ENCODE measurements at regions of chr4 and their contacts with region 1.

Region 1: DNA sequence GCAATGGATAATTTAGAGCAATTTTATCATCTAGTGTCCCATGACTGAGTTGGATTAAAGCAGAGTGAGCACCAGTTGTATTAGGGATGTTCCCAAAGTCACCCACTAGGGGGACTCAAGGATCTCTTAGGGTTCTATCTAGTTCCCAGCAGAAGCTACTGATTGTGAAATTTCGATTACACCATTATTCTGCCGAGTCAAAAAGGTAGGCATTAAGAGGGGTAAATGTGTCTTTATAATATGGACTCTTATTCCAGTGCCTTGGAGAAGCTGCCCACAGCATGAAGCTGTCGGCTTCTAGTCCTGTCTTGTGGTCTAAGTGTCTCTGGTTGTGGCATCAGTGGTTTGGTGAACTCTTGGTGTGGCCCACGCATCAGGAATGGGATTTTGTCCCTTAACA is 53.3 kb downstream of the RGS12 start:
- DNase-seq: peak; percentile 85
- H3K4me3 ChIP-seq: no peak overlapping the region
- H3K27ac ChIP-seq: no peak overlapping the region
- H3K4me1 ChIP-seq: 0 out of 2 replicates have a peak, but pooled peaks cover 7% of the 10 kb centered on the region
- H3K27me3 ChIP-seq: no peaks in the 10 kb centered on the region

Region 2: GRCh38 chr4:2647403-2648158 is 698.6 kb before region 1 on chr4:
- in situ Hi-C with region 1: no loop called
- DNase-seq: no peak
- H3K4me3 ChIP-seq: no peak overlapping the region
- H3K27ac ChIP-seq: no peak overlapping the region
- H3K4me1 ChIP-seq: no peaks in the 10 kb centered on the region
- H3K27me3 ChIP-seq: no peaks in the 10 kb centered on the region

Region 3: GRCh38 chr4:3449574-3450534 is 103.7 kb after region 1 on chr4:
- in situ Hi-C with region 1: loop called (anchors 5 kb)
- DNase-seq: no peak
- H3K4me3 ChIP-seq: no peak overlapping the region
- H3K27ac ChIP-seq: no peak overlapping the region
- H3K4me1 ChIP-seq: peaks cover 8% of the 10 kb centered on the region; the same call in 1 of the 2 replicates
- H3K27me3 ChIP-seq: no peaks in the 10 kb centered on the region

Region 4: GRCh38 chr4:3624523-3624922 is 278.4 kb after region 1 on chr4:
- in situ Hi-C with region 1: no loop called
- DNase-seq: no peak
- H3K4me3 ChIP-seq: no peak overlapping the region
- H3K27ac ChIP-seq: no peak overlapping the region
- H3K4me1 ChIP-seq: no peaks in the 10 kb centered on the region
- H3K27me3 ChIP-seq: peaks cover 18% of the 10 kb centered on the region